ENCODE measurements at regions of chr5 and their contacts with region 1.

Region 1: DNA sequence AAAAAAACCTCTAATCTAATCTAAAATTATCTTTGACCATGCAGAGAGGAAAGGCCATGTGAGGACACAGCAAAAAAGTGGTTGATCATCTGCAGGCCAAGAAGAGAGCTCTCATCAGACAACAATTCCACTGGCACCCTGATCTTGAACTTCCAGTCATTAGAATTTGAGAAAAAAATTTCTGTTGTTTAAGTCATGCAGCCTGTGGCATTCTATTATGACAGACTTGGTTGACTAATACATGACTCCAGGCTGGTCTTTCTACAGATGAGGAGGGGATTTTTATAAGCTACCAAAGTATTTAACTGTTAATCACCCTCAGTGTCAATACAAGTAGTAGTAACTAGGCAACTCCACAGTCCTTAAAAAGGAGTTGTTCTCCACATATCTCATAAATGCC is 358.5 kb upstream of the RGMB start:
- DNase-seq: peak; percentile 95
- ATAC-seq: peak; percentile 83
- H3K4me3 ChIP-seq: no peak overlapping the region
- H3K27ac ChIP-seq: no peak overlapping the region
- H3K4me1 ChIP-seq: peaks cover 15% of the 10 kb centered on the region; the same call in 1 of the 2 replicates
- H3K27me3 ChIP-seq: no peaks in the 10 kb centered on the region
- CTCF ChIP-seq: no peak
- POLR2A ChIP-seq: no peak
- RAD21 ChIP-seq: no peak; the same call in 1 of the 2 replicates

Region 2: DNA sequence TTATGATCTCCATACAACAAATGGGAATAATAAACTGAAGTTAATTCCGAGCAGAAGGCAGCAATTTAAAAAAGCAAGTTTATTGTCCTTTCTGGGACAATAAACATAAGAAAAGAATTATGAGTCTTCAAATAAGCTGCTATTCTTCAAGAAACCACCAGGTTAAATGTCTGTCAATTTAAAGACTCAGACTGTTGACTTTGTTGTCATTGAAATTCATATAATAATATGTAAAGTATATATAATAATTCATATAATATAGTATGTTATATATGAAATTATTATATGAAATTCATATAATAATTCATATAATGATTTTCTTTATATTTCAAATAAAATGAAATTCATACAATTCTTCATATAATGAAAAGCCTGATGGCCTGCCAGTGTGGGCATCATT is 139.0 kb before region 1 on chr5:
- CTCF ChIA-PET with region 1: no interaction called
- POLR2A ChIA-PET with region 1: no interaction called
- dilution Hi-C with region 1: no loop called
- in situ Hi-C with region 1: no loop called
- intact Hi-C with region 1: no loop called
- DNase-seq: no peak
- ATAC-seq: no peak
- H3K4me3 ChIP-seq: no peak overlapping the region
- H3K27ac ChIP-seq: no peak overlapping the region
- H3K4me1 ChIP-seq: no peaks in the 10 kb centered on the region
- H3K27me3 ChIP-seq: no peaks in the 10 kb centered on the region
- CTCF ChIP-seq: no peak
- POLR2A ChIP-seq: no peak
- RAD21 ChIP-seq: no peak

Region 3: GRCh38 chr5:98428806-98429205 is 13.9 kb after region 1 on chr5:
- CTCF ChIA-PET with region 1: interaction called, 3 read pairs
- POLR2A ChIA-PET with region 1: no interaction called
- dilution Hi-C with region 1: no loop called
- in situ Hi-C with region 1: no loop called
- intact Hi-C with region 1: loop called (anchors 1 kb)
- DNase-seq: peak; percentile 54
- ATAC-seq: peak; percentile 46; the same call in 1 of the 2 replicates
- H3K4me3 ChIP-seq: no peak overlapping the region
- H3K27ac ChIP-seq: no peak overlapping the region
- H3K4me1 ChIP-seq: peaks cover 12% of the 10 kb centered on the region
- H3K27me3 ChIP-seq: no peaks in the 10 kb centered on the region
- CTCF ChIP-seq: no peak
- POLR2A ChIP-seq: no peak
- RAD21 ChIP-seq: no peak

Region 4: DNA sequence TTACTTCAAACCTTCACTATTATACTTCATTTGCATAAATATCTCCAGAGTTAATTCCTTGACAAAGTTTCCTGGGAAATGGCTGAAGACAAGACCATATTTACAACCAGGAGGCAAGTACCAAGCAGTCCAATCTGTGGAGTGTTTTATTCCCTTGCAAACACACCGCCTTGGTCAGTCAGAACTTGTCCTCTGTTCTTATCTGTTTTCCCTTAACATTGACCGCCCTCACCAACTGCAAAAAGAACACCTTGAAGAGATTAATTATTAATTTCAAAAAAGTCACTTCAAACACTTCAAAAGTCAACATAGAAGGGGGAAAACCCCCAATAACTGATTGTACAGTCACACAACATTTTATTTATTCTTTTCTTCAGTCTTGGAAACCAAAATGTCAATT is 89.6 kb after region 1 on chr5:
- CTCF ChIA-PET with region 1: no interaction called
- POLR2A ChIA-PET with region 1: no interaction called
- dilution Hi-C with region 1: no loop called
- in situ Hi-C with region 1: no loop called
- intact Hi-C with region 1: no loop called
- DNase-seq: no peak
- ATAC-seq: no peak
- H3K4me3 ChIP-seq: no peak overlapping the region
- H3K27ac ChIP-seq: no peak overlapping the region
- H3K4me1 ChIP-seq: peaks cover 6% of the 10 kb centered on the region
- H3K27me3 ChIP-seq: no peaks in the 10 kb centered on the region
- CTCF ChIP-seq: no peak
- POLR2A ChIP-seq: no peak
- RAD21 ChIP-seq: no peak

Measured in IMR-90 (cell line).